Common myeloid progenitor, CD34-positive (primary cell): ENCODE measurements at regions of chr9 and their contacts with region 1.

Region 1: GRCh38 chr9:129596541-129597331 is 24.2 kb downstream of the C9orf50 start:
- DNase-seq: no peak
- H3K4me3 ChIP-seq: no peak overlapping the region
- H3K27ac ChIP-seq: no peak overlapping the region
- H3K4me1 ChIP-seq: peaks cover 0 to 38% (median 36%) of the 10 kb centered on the region in 4 experiments
- H3K27me3 ChIP-seq: peaks cover 0 to 10% (median 2%) of the 10 kb centered on the region in 5 experiments

Region 2: DNA sequence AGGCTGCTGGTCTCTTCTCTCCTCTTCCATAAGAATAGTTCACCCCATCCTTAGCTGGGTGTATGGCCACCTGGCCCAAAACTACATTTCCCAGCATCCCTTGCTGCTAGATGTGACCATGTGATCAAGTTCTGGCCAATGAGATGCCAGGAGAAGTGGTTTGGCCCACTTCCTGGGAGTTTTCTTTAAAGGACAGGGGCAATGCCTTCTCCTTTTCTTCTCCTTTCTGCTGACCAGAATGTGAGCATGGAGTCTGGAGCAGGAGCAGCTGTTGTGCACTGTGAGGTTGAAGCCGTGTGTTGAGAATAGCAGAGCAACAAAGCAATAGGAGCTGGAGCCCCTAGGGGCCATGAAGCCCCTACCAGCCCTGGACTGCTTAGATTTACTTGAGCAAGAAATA is 12.6 kb before region 1 on chr9:
- CTCF ChIA-PET with region 1: interaction called, 11 read pairs
- POLR2A ChIA-PET with region 1: no interaction called
- DNase-seq: peak; percentile 74 to 82 (median 80)
- H3K4me3 ChIP-seq: no peak overlapping the region
- H3K27ac ChIP-seq: no peak overlapping the region
- H3K4me1 ChIP-seq: peaks cover 0 to 44% (median 24%) of the 10 kb centered on the region in 4 experiments
- H3K27me3 ChIP-seq: no peaks in the 10 kb centered on the region